Activated naive CD4-positive, alpha-beta T cell treated with anti-CD3 and anti-CD28 coated beads for 36 hours (primary cell): ENCODE measurements at regions of chr6 and their contacts with region 1.

Region 1: DNA sequence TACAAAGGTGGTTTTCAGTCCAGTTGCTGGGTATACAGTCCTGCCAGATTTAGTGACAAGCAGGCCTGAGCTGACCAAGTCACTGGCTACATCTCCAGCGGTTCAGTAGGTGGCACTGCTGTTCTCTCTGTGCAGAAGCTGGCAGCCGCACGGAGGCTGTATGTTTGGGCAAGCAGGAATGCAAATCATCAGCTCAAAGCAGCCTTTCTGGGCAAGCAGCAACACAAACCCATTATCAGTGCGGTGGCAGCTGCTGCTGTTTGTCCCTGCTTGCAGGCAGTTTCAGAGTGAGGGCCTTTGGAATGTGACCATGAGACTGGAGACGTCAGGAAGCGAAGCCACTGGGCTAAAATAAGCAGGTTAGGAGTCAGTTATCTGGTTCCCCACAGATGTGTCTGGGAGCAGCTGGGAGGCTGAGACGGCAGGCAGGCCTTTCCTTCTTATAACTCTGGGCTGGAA is 72.5 kb downstream of the TXLNB start:
- DNase-seq: peak; percentile 87
- H3K4me3 Mint-ChIP-seq: peak overlapping the region; percentile 5
- H3K27ac Mint-ChIP-seq: no peak overlapping the region
- H3K4me1 Mint-ChIP-seq: peaks cover 9% of the 10 kb centered on the region
- H3K27me3 Mint-ChIP-seq: no peaks in the 10 kb centered on the region

Region 2: DNA sequence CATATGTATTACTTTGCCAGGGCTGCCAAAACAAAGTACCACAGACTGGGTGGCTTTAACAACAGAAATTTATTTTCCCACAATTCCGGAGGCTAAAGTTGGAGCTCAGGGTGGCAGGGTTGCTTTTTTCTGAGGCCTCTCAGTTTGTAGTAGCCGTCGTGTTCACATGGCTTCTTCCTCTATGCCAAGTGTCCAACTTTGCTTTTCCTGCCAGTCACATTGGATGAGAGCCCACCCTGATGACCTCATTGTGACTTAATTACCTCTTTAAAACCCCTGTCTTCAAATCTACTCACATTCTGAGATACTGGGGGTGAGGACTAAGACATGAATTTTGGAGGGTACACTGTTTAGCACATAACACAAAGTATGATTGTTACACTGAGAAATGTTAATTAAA is 433.3 kb before region 1 on chr6:
- CTCF ChIA-PET with region 1: no interaction called
- intact Hi-C with region 1: no loop called
- DNase-seq: no peak
- H3K4me3 Mint-ChIP-seq: no peak overlapping the region
- H3K27ac Mint-ChIP-seq: no peak overlapping the region
- H3K4me1 Mint-ChIP-seq: peaks cover 3% of the 10 kb centered on the region
- H3K27me3 Mint-ChIP-seq: no peaks in the 10 kb centered on the region

Region 3: GRCh38 chr6:138817822-138818308 is 401.4 kb before region 1 on chr6:
- CTCF ChIA-PET with region 1: no interaction called
- intact Hi-C with region 1: loop called (anchors 1 kb)
- DNase-seq: peak; percentile 8
- H3K4me3 Mint-ChIP-seq: no peak overlapping the region
- H3K27ac Mint-ChIP-seq: no peak overlapping the region
- H3K4me1 Mint-ChIP-seq: peaks cover 20% of the 10 kb centered on the region
- H3K27me3 Mint-ChIP-seq: no peaks in the 10 kb centered on the region

Region 4: DNA sequence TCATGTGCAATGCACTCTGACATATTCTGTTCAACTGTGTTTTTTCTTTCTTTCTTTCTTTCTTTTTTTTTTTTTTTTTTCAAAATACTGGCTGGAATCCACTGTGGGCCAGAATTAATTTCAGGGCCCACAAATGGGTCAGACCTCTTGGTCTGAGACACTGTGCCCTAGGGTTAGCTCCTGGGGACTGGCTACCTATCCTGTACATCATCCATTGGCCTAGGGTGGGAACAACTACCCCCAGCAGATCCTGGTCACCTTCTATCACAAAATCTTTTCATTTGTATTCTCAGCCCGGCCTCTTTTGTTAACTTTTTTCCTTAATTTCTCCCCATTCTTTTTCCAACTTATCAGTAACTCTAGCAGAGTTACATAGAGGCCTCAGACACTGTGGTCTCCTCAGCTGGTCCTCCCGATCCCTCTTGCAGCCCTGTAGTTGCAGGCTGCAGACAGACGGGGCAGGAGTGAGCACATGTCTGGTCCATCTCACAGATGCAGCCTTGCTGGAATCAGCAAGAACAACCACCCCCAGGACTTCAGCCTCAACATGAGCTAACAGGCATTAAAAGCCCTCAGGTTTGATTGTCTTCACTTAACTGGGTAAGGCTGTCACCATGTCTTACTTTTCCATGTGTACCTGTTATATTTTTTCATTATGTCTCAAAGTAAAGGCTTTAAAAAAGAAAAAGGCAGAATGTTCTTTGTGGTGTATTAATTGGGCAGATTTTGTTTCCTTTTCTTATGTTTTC is 31.2 kb after region 1 on chr6:
- CTCF ChIA-PET with region 1: interaction called, 6 read pairs
- intact Hi-C with region 1: loop called (anchors 1 kb)
- DNase-seq: peak; percentile 66
- H3K4me3 Mint-ChIP-seq: no peak overlapping the region
- H3K27ac Mint-ChIP-seq: peak overlapping the region; percentile 20
- H3K4me1 Mint-ChIP-seq: peaks cover 40% of the 10 kb centered on the region
- H3K27me3 Mint-ChIP-seq: no peaks in the 10 kb centered on the region

Region 5: GRCh38 chr6:139364302-139364981 is 145.1 kb after region 1 on chr6:
- CTCF ChIA-PET with region 1: interaction called, 84 read pairs
- intact Hi-C with region 1: loop called (anchors 1 kb)
- DNase-seq: no peak
- H3K4me3 Mint-ChIP-seq: no peak overlapping the region
- H3K27ac Mint-ChIP-seq: no peak overlapping the region
- H3K4me1 Mint-ChIP-seq: peaks cover 26% of the 10 kb centered on the region
- H3K27me3 Mint-ChIP-seq: no peaks in the 10 kb centered on the region

Region 6: GRCh38 chr6:139540276-139540675 is 321.0 kb after region 1 on chr6:
- CTCF ChIA-PET with region 1: no interaction called
- intact Hi-C with region 1: loop called (anchors 10 kb)
- DNase-seq: peak; percentile 79
- H3K4me3 Mint-ChIP-seq: no peak overlapping the region
- H3K27ac Mint-ChIP-seq: peak overlapping the region; percentile 32
- H3K4me1 Mint-ChIP-seq: peaks cover 12% of the 10 kb centered on the region
- H3K27me3 Mint-ChIP-seq: no peaks in the 10 kb centered on the region